Esophagus squamous epithelium (tissue), 5 donors: ENCODE measurements at regions of chr16 and their contacts with region 1.

Region 1: DNA sequence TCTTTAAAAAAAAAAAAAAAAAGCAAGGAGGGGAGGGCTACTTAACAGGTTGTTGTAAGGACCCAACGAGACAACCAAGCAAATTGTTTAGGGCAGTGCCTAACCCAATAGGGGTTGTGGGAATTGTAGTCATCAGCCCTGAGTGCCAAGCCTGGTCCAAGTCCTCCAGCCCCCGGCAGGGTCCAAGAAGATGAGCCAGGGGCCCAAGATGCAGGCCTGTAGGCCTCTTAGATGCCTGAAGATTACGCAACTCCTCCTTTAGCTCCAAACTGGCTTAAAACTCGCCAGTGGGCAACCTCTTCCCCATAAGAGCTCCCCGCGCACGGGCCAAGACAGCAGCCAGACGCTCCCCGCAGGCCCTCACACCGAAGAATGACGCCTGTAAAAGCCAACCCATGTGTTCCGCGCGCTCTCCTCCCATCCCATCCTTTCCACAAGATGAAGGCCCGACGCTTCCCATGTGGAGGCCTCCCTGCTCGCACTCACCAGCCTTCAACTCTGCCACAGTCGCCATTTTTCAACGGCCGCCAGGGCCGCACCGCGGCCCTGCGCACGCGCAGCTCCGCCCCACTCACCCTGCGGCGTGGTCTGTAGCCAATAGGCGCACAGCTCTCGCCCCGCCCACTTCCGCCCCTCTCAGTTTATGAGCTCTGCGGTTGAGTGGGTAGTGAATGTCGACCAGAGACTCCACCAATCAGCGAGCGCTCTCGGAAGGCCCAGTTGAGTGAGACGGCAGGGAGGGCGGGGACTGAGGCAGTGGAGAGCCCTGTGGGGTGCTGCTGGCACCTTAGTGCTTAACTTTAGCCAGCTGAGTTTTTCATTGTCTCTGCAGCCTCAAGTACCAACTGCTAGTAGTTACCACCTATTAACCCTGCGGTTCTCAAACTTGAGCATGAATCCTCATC is at the start of gene CEP20:
- DNase-seq: peak; percentile 98
- H3K4me3 ChIP-seq: peak within 1 kb of the TSS; percentile 89 to 95 (median 93)
- H3K27ac ChIP-seq: peak within 1 kb of the TSS; percentile 94 to 98 (median 97)
- H3K4me1 ChIP-seq: peaks cover 23 to 65% (median 26%) of the 10 kb centered on the region in 3 donors
- H3K27me3 ChIP-seq: no peaks in the 10 kb centered on the region
- CTCF ChIP-seq: peak in 4 of 6 experiments; percentile 34 to 57 (median 51)
- POLR2A ChIP-seq: peak in 3 of 4 donors; percentile 64 to 86 (median 81)
- total RNA-seq, gene CEP20: 36.1 to 74.3 (median 42.5) TPM

Region 2: GRCh38 chr16:15822957-15823356 is 65.4 kb before region 1 on chr16:
- intact Hi-C with region 1: no loop called
- DNase-seq: no peak
- H3K4me3 ChIP-seq: no peak overlapping the region
- H3K27ac ChIP-seq: peak overlapping the region; percentile 9 to 75 (median 70)
- H3K4me1 ChIP-seq: peaks cover 0 to 14% (median 0%) of the 10 kb centered on the region in 3 donors
- H3K27me3 ChIP-seq: no peaks in the 10 kb centered on the region
- CTCF ChIP-seq: no peak
- POLR2A ChIP-seq: no peak

Region 3: GRCh38 chr16:15949210-15950160 is 61.2 kb after region 1 on chr16 and contains the start of gene ABCC1:
- intact Hi-C with region 1: loop called (anchors 10 kb)
- DNase-seq: no peak
- H3K4me3 ChIP-seq: peak within 1 kb of the TSS; percentile 86 to 95 (median 94)
- H3K27ac ChIP-seq: peak within 1 kb of the TSS; percentile 92 to 96 (median 96)
- H3K4me1 ChIP-seq: peaks cover 18 to 81% (median 42%) of the 10 kb centered on the region in 3 donors
- H3K27me3 ChIP-seq: no peaks in the 10 kb centered on the region
- CTCF ChIP-seq: no peak
- POLR2A ChIP-seq: peak in 1 of 4 donors; percentile 23
- total RNA-seq, gene ABCC1: 22.9 to 56.7 (median 46.9) TPM